WTC11 (cell line): ENCODE measurements at regions of chr19 and their contacts with region 1.

Region 1: DNA sequence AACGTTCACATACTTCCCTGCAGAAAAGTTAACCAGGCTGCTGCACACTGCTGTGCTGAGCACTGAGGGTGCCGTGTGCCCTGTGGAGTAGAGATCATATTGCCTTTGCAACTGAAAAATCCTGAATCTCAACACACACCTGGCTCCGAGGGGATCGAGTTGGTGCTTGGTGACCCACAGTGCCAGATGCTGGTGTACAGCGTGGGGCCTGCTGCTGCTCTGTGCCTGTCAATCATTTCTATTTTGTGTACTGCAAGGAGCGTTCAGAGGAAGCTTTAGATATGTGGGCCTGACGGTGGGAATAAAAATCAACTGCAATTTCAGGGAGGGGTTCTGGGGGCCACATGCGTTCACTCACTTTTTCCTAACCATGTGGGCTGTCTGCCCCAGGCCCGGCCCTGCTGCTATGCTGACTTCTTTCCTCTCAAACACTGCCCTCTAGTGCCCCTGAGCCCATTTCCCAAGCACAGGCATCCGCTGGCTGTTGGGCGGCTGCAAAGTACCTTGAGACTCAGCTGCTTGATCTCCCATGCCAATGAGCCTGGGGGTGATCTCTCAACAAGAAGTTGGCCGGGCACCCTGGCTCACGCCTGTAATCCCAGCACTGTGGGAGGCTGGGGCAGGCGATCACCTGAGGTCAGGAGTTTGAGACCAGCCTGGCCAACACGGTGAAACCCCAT is 9.7 kb upstream of the LENG8 start:
- DNase-seq: peak; percentile 79
- ATAC-seq: peak; percentile 85
- H3K4me3 Mint-ChIP-seq: no peak overlapping the region
- H3K27ac Mint-ChIP-seq: peak overlapping the region; percentile 49; the same call in 1 of the 2 replicates
- H3K4me1 Mint-ChIP-seq: peaks cover 27% of the 10 kb centered on the region
- H3K27me3 Mint-ChIP-seq: peaks cover 7% of the 10 kb centered on the region
- CTCF ChIP-seq: no peak

Region 2: GRCh38 chr19:54418030-54418929 is 21.0 kb before region 1 on chr19:
- CTCF ChIA-PET with region 1: interaction called, 61 read pairs
- POLR2A ChIA-PET with region 1: interaction called, 4 read pairs
- DNase-seq: no peak
- ATAC-seq: no peak
- H3K4me3 Mint-ChIP-seq: peak overlapping the region; percentile 51
- H3K27ac Mint-ChIP-seq: peak overlapping the region; percentile 43
- H3K4me1 Mint-ChIP-seq: peaks cover 45% of the 10 kb centered on the region
- H3K27me3 Mint-ChIP-seq: peaks cover 33% of the 10 kb centered on the region
- CTCF ChIP-seq: no peak

Region 3: GRCh38 chr19:54463531-54464043 is 24.3 kb after region 1 on chr19 and contains the start of gene LENG9:
- CTCF ChIA-PET with region 1: interaction called, 27 read pairs
- POLR2A ChIA-PET with region 1: no interaction called
- DNase-seq: peak; percentile 99
- ATAC-seq: peak; percentile 59
- H3K4me3 Mint-ChIP-seq: peak within 1 kb of the TSS; percentile 78
- H3K27ac Mint-ChIP-seq: peak within 1 kb of the TSS; percentile 99
- H3K4me1 Mint-ChIP-seq: peaks cover 7% of the 10 kb centered on the region
- H3K27me3 Mint-ChIP-seq: peaks cover 25% of the 10 kb centered on the region
- CTCF ChIP-seq: no peak
- total RNA-seq, gene LENG9: 6.1 to 7.5 TPM (median 6.9 TPM) in 3 replicates

Region 4: GRCh38 chr19:54473021-54473891 is 33.9 kb after region 1 on chr19 and contains the start of gene CDC42EP5:
- CTCF ChIA-PET with region 1: interaction called, 10 read pairs
- POLR2A ChIA-PET with region 1: no interaction called
- DNase-seq: no peak
- ATAC-seq: peak; percentile 71
- H3K4me3 Mint-ChIP-seq: peak within 1 kb of the TSS; percentile 47
- H3K27ac Mint-ChIP-seq: peak within 1 kb of the TSS; percentile 10; the same call in 1 of the 2 replicates
- H3K4me1 Mint-ChIP-seq: peaks cover 26% of the 10 kb centered on the region
- H3K27me3 Mint-ChIP-seq: peaks cover 51% of the 10 kb centered on the region
- CTCF ChIP-seq: no peak
- total RNA-seq, gene CDC42EP5: 11.5 to 19.8 TPM (median 18.3 TPM) in 3 replicates